Activated naive CD4-positive, alpha-beta T cell treated with anti-CD3 and anti-CD28 coated beads for 36 hours (primary cell): ENCODE measurements at regions of chr19 and their contacts with region 1.

Region 1: DNA sequence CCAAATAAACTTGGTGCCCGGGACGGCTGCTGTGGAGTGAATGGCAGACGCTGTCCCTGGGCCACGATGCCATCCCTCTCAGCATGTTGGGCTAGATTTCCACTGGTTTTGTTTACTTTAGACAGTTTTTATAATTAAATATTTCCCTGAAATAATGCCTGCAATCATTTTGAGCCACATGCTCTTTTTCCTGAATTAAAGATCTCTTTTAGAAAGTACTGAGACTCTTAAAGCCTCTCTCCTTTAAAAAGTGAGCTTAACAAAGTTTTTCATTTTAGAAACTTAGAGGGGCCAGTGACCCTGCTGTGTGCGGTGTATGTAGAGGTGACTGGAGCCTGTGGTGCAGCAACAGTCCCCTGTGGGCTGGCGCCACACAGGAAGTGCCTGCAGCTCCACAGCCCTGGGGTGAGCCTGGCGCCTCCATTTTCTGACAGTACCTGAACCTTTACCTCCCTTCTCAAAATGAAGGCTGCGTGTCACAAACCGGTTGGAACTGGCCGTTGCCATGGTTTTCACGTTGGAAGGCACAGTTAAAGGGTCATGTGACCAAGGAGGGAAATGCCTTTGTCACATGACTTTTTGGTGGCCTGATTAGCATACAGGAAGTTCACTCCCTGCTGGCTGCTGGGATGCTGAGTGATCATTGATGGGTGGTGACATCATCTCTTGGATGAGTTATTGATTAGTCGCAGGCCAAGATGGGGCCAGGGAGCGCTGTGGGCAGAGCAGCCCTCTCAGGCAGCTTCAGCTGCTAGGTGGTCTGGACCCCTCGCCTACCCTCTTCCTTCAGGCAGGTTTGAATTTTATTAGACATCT is 26.3 kb downstream of the TSSK6 start:
- DNase-seq: peak; percentile 97
- H3K4me3 Mint-ChIP-seq: peak overlapping the region; percentile 46
- H3K27ac Mint-ChIP-seq: peak overlapping the region; percentile 96
- H3K4me1 Mint-ChIP-seq: peaks cover 53% of the 10 kb centered on the region
- H3K27me3 Mint-ChIP-seq: no peaks in the 10 kb centered on the region

Region 2: GRCh38 chr19:19145684-19146608 is 343.1 kb before region 1 on chr19:
- CTCF ChIA-PET with region 1: no interaction called
- intact Hi-C with region 1: loop called (anchors 1 kb)
- DNase-seq: peak; percentile 92
- H3K4me3 Mint-ChIP-seq: no peak overlapping the region
- H3K27ac Mint-ChIP-seq: no peak overlapping the region
- H3K4me1 Mint-ChIP-seq: no peaks in the 10 kb centered on the region
- H3K27me3 Mint-ChIP-seq: no peaks in the 10 kb centered on the region

Region 3: DNA sequence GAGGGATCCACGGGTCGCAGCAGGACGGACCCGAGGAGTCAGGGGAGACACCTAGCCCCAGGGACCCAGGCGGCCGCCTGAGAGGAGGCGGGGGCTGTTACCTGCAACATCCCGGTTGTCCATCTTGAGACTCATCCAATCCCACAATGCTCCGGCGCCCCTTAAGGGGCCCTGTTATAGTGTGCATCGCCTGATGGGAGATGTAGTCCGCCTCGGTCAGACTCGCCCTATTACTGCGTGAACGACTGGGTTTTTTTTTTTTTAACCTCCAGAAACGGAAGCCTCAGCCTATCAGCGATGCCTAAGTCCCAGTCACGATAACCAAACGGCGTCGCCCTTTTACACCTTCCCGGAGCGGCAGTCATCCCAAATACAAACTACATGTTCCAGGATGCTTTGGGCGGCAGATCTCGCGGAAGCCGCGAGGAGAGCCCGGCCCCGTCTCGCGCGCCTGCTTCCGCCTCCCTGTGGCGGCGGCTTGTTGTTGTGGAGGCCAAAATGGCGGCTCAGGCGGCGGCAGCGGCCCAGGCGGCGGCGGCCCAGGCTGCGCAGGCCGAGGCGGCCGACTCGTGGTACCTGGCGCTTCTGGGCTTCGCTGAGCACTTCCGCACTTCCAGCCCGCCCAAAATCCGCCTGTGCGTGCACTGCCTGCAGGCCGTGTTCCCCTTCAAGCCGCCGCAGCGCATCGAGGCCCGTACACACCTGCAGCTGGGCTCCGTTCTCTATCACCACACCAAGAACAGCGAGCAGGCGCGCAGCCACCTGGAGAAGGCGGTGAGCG is 168.5 kb before region 1 on chr19 and contains the starts of genes MAU2 and SUGP1:
- CTCF ChIA-PET with region 1: interaction called, 5 read pairs
- intact Hi-C with region 1: loop called (anchors 1 kb)
- DNase-seq: peak; percentile 94
- H3K4me3 Mint-ChIP-seq: peak within 1 kb of the TSS; percentile 93
- H3K27ac Mint-ChIP-seq: peak within 1 kb of the TSS; percentile 99
- H3K4me1 Mint-ChIP-seq: peaks cover 47% of the 10 kb centered on the region
- H3K27me3 Mint-ChIP-seq: no peaks in the 10 kb centered on the region
- total RNA-seq, gene MAU2: 38.6 to 42.5 TPM
- total RNA-seq, gene SUGP1: 31.7 to 32.4 TPM

Region 4: DNA sequence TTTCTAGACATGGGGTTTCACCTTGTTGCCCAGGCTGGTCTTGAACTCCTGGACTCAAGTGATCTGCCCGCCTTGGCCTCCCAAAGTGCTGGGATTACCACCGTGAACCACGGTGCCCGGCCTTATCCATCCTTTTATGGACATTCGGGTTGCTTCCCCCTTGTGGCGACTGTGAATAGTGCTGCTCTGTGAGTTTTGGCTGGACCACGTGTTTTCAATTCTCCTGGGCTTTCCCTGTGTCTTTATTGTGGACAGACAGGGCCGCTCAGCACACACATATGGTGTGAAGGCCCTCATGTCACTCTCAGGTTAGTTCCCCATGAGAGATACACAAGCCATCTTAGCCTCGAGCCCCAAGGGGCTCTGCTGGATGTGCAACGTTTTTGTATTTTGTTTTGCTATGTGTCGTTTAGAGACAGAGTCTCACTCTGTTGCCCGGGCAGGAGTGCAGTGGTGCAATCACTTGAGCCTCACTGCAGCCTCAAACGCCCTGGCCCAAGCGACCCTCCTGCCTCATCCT is 127.9 kb before region 1 on chr19:
- CTCF ChIA-PET with region 1: interaction called, 162 read pairs
- intact Hi-C with region 1: loop called (anchors 1 kb)
- DNase-seq: peak; percentile 92
- H3K4me3 Mint-ChIP-seq: no peak overlapping the region
- H3K27ac Mint-ChIP-seq: no peak overlapping the region
- H3K4me1 Mint-ChIP-seq: peaks cover 27% of the 10 kb centered on the region
- H3K27me3 Mint-ChIP-seq: no peaks in the 10 kb centered on the region

Region 5: DNA sequence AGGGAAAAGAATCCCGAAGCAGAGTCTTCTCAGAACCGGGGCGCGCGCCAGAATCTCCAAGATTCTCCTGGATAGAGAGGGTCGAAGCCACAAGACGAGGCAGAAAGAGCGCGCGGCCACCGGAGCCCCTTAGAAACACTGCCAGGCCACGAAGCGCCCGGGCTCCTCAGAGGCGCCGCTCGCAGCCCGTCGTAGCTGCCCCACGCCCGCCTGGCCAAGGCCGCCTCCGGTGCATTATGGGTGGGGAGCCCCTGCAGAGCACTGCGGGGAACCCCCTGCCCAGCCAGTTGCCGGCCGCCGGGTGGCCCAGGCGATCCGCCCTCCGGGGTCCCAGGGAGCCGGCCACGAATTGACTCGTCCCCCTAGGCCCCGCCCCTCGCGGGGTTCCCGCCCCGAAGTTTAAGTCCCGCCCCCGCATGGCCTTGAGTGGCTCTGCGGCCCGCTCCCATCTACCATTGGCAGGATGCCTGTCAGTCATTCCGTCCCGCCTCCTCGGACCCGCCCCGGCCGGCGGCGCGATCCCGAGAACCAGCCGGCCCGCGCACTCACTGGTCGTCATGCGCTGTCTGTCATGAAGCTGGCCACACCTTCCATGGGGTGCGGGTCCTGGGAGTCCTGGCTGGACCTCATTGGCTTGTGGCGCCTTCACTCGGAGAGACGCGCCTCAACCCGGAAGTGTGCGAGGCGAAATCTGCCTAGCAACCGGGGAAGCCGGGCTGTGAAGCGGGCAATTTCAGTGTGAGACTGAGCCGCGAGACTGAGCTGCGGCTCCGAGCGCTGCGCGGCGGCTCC is 103.8 kb before region 1 on chr19:
- CTCF ChIA-PET with region 1: interaction called, 6 read pairs
- intact Hi-C with region 1: loop called (anchors 1 kb)
- DNase-seq: peak; percentile 100
- H3K4me3 Mint-ChIP-seq: peak overlapping the region; percentile 84
- H3K27ac Mint-ChIP-seq: peak overlapping the region; percentile 72
- H3K4me1 Mint-ChIP-seq: peaks cover 38% of the 10 kb centered on the region
- H3K27me3 Mint-ChIP-seq: no peaks in the 10 kb centered on the region

Region 6: DNA sequence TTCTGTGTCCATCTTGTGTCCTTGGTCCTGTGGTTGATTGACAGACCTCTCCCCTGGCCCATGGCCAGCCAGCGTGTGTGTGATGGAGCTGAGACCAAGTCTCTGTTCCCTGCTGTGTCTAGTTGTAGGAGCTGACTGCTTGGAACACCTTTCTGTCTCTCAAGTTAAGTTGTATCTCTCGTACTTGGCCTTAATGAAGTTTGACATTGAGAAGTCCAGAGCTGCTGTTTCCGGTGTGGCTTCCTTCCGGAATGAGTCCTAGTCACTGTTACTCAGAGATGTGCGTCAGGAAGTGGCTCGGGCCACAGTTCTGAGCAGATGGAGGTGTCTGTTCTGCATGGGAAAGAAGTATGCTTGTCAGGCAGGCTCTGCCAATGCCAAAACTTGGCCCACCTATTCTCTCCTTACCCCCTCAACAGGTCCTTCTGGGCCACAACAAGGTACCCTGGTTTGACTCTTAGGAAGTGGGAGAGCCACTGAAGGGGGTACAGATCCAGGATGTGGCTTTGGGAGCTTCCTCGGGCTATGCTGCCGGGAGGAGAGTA is 29.3 kb before region 1 on chr19:
- CTCF ChIA-PET with region 1: interaction called, 21 read pairs
- intact Hi-C with region 1: loop called (anchors 1 kb)
- DNase-seq: peak; percentile 89
- H3K4me3 Mint-ChIP-seq: peak overlapping the region; percentile 76
- H3K27ac Mint-ChIP-seq: peak overlapping the region; percentile 96
- H3K4me1 Mint-ChIP-seq: peaks cover 86% of the 10 kb centered on the region
- H3K27me3 Mint-ChIP-seq: no peaks in the 10 kb centered on the region

Region 7: GRCh38 chr19:19515764-19516519 is 26.9 kb after region 1 on chr19 and contains the start of gene NDUFA13:
- CTCF ChIA-PET with region 1: interaction called, 11 read pairs
- intact Hi-C with region 1: loop called (anchors 1 kb)
- DNase-seq: peak; percentile 96
- H3K4me3 Mint-ChIP-seq: peak within 1 kb of the TSS; percentile 86
- H3K27ac Mint-ChIP-seq: peak within 1 kb of the TSS; percentile 96
- H3K4me1 Mint-ChIP-seq: peaks cover 36% of the 10 kb centered on the region
- H3K27me3 Mint-ChIP-seq: no peaks in the 10 kb centered on the region
- total RNA-seq, gene NDUFA13: 351 to 376 TPM